AG04450 (cell line): ENCODE measurements at regions of chr5 and their contacts with region 1.

Region 1: DNA sequence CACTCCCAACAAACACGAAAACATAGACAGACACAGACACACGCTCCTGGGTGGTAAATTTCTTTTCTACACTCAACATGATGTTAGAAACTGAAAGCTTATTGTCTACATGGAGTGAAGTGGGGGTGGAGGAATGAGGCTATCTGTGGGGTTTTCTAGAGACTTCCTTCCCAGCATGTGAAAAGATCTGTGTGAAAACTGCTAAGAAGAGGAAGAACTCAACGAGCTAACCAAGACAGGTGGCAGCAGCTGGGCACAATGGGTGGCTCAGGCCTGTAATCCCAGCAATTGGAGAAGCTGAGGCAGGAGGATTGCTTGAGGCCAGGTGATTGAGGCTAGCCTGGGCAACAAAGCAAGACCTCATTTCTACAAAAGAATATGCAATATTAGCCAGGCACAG is 7.6 kb downstream of the FYB1 start:
- DNase-seq: no peak
- H3K4me3 ChIP-seq: no peak overlapping the region
- H3K27ac ChIP-seq: no peak overlapping the region
- H3K27me3 ChIP-seq: no peaks in the 10 kb centered on the region
- CTCF ChIP-seq: no peak

Region 2: GRCh38 chr5:39074016-39074886 is 137.5 kb before region 1 on chr5 and contains the start of gene RICTOR:
- CTCF ChIA-PET with region 1: interaction called, 9 read pairs
- POLR2A ChIA-PET with region 1: interaction called, 10 read pairs
- DNase-seq: peak; percentile 41
- H3K4me3 ChIP-seq: peak within 1 kb of the TSS; percentile 86
- H3K27ac ChIP-seq: peak within 1 kb of the TSS; percentile 89
- H3K27me3 ChIP-seq: no peaks in the 10 kb centered on the region
- CTCF ChIP-seq: no peak
- polyA plus RNA-seq, gene RICTOR: 9.9 and 15.6 TPM in 2 replicates